ENCODE measurements at regions of chr17 and their contacts with region 1.

Region 1: GRCh38 chr17:3647769-3648555 is 11.4 kb downstream of the CTNS start:
- DNase-seq: peak; percentile 69
- H3K4me3 Mint-ChIP-seq: no peak overlapping the region
- H3K27ac Mint-ChIP-seq: no peak overlapping the region
- H3K4me1 Mint-ChIP-seq: peaks cover 4% of the 10 kb centered on the region
- H3K27me3 Mint-ChIP-seq: no peaks in the 10 kb centered on the region

Region 2: DNA sequence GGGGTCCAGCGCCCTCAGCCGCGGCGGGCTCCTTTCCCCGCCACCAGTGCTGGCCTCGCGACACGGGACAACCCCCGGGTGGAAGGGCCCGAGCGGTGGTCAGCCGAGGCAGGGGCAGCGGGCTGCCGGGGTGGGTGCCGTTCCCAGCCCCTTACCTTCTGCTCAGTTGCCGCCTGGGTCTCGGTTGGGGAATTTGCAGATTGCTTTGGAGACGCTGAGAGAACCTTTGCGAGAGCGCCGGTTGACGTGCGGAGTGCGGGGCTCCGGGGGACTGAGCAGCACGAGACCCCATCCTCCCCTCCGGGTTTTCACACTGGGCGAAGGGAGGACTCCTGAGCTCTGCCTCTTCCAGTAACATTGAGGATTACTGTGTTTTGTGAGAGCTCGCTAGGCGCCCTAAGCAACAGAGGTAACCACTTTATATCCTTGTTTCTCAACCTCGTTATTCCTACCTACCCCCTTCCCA is 11.0 kb before region 1 on chr17:
- CTCF ChIA-PET with region 1: interaction called, 10 read pairs
- POLR2A ChIA-PET with region 1: no interaction called
- DNase-seq: peak; percentile 23
- H3K4me3 Mint-ChIP-seq: peak overlapping the region; percentile 89
- H3K27ac Mint-ChIP-seq: peak overlapping the region; percentile 72
- H3K4me1 Mint-ChIP-seq: peaks cover 56% of the 10 kb centered on the region
- H3K27me3 Mint-ChIP-seq: no peaks in the 10 kb centered on the region